B cell (primary cell): ENCODE measurements at regions of chr19 and their contacts with region 1.

Region 1: DNA sequence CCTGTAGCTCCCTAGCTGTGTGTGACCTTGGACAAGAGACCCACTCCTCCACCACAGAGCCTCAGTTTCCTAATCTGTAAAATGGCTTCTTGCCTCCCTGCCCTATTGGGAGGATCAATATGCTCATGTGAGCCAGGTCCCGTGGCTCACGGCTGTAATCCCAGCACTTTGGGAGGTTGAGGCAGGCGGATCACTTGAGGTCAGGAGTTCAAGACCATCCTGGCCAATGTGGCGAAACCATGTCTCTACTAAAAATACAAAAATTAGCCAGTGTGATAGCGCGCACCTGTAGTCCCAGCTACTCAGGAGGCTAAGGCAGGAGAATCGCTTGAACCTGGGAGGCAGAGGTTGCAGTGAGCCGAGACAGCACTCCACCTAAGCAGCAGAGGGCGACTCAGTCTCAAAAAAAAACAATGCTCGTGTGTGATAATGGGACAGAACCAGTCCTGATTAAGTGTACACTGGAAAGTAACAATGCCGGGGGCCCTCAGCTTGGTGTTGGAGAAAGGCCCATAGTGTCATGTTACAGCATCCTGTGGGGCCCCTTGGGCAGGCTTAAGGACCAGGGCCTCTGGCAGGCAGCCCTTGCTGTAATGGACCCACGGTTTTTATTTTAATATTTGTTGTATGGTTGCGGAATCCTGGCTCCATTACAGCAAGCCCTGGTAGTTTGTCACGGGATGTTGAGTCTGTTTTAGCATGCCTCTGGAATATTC is 6.8 kb downstream of the RPS11 start:
- DNase-seq: peak; percentile 72
- ATAC-seq: no peak
- H3K4me3 ChIP-seq: no peak overlapping the region
- H3K4me3 Mint-ChIP-seq: no peak overlapping the region
- H3K27ac ChIP-seq: peak overlapping the region; percentile 89 to 98
- H3K27ac Mint-ChIP-seq: peak overlapping the region; percentile 99
- H3K4me1 ChIP-seq: peaks cover 31 to 55% of the 10 kb centered on the region in 2 donors
- H3K4me1 Mint-ChIP-seq: peaks cover 51% of the 10 kb centered on the region
- H3K27me3 ChIP-seq: no peaks in the 10 kb centered on the region
- H3K27me3 Mint-ChIP-seq: no peaks in the 10 kb centered on the region
- CTCF ChIP-seq: peak; percentile 70

Region 2: GRCh38 chr19:49097455-49098288 is 405.4 kb before region 1 on chr19:
- CTCF ChIA-PET with region 1: no interaction called
- POLR2A ChIA-PET with region 1: no interaction called
- intact Hi-C with region 1: no loop called
- DNase-seq: peak; percentile 84
- ATAC-seq: peak; percentile 95
- H3K4me3 ChIP-seq: no peak overlapping the region
- H3K4me3 Mint-ChIP-seq: no peak overlapping the region
- H3K27ac ChIP-seq: no peak overlapping the region
- H3K27ac Mint-ChIP-seq: no peak overlapping the region
- H3K4me1 ChIP-seq: no peaks in the 10 kb centered on the region
- H3K4me1 Mint-ChIP-seq: peaks cover 4% of the 10 kb centered on the region
- H3K27me3 ChIP-seq: no peaks in the 10 kb centered on the region
- H3K27me3 Mint-ChIP-seq: no peaks in the 10 kb centered on the region
- CTCF ChIP-seq: peak; percentile 99

Region 3: DNA sequence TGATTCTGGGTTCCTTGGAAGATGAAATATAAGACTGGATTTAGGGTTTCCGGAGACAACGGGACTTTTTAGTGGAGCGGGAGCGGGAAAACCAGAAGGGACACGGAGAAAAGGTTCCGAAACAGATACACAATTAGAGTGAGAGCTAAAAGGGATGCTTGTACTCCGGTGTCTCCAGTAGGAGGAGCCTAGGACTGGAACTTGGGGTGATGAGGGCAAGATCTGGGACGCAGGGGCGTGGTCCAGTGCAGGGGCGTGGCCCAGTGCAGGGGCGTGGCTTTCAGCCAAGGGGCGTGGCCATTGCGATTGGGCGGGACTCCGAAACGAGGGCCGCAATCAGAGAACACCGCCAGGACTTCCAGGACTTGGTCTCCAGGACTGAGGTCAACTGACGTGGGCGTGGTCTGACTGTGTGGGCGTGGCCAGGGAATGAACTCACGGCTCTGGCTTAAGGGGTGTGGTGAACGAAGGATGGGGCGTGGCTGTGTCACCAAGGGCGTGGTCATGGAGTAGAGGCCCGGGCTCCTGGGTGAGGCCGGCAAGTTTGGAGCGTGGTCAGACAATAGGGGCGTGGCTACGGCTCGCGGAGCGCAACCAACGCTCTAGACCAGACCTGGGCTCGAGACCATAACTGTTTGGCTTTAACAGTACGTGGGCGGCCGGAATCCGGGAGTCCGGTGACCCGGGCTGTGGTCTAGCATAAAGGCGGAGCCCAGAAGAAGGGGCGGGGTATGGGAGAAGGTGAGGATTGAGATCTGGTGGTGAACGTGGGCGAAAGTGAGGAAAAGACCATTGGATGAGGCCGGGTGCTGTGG is 139.5 kb before region 1 on chr19 and contains the start of gene DKKL1:
- CTCF ChIA-PET with region 1: no interaction called
- POLR2A ChIA-PET with region 1: no interaction called
- intact Hi-C with region 1: no loop called
- DNase-seq: peak; percentile 88
- ATAC-seq: peak; percentile 80
- H3K4me3 ChIP-seq: peak within 1 kb of the TSS in 4 of 5 experiments; percentile 45 to 83 (median 58)
- H3K4me3 Mint-ChIP-seq: peak within 1 kb of the TSS; percentile 35
- H3K27ac ChIP-seq: peak within 1 kb of the TSS in 1 of 2 donors; percentile 6
- H3K27ac Mint-ChIP-seq: no peak within 1 kb of the TSS
- H3K4me1 ChIP-seq: peaks cover 46 to 55% of the 10 kb centered on the region in 2 donors
- H3K4me1 Mint-ChIP-seq: peaks cover 37% of the 10 kb centered on the region
- H3K27me3 ChIP-seq: peaks cover 0 to 10% (median 3%) of the 10 kb centered on the region in 4 experiments
- H3K27me3 Mint-ChIP-seq: no peaks in the 10 kb centered on the region
- CTCF ChIP-seq: no peak
- total RNA-seq, gene DKKL1: 0.68 and 1.2 TPM in 2 replicates

Region 4: GRCh38 chr19:49539192-49539952 is 36.3 kb after region 1 on chr19:
- CTCF ChIA-PET with region 1: interaction called, 23 read pairs
- POLR2A ChIA-PET with region 1: no interaction called
- intact Hi-C with region 1: no loop called
- DNase-seq: no peak
- ATAC-seq: no peak
- H3K4me3 ChIP-seq: no peak overlapping the region
- H3K4me3 Mint-ChIP-seq: no peak overlapping the region
- H3K27ac ChIP-seq: no peak overlapping the region
- H3K27ac Mint-ChIP-seq: peak overlapping the region; percentile 26
- H3K4me1 ChIP-seq: peaks cover 24 to 35% of the 10 kb centered on the region in 2 donors
- H3K4me1 Mint-ChIP-seq: peaks cover 35% of the 10 kb centered on the region
- H3K27me3 ChIP-seq: no peaks in the 10 kb centered on the region
- H3K27me3 Mint-ChIP-seq: no peaks in the 10 kb centered on the region
- CTCF ChIP-seq: no peak

Region 5: DNA sequence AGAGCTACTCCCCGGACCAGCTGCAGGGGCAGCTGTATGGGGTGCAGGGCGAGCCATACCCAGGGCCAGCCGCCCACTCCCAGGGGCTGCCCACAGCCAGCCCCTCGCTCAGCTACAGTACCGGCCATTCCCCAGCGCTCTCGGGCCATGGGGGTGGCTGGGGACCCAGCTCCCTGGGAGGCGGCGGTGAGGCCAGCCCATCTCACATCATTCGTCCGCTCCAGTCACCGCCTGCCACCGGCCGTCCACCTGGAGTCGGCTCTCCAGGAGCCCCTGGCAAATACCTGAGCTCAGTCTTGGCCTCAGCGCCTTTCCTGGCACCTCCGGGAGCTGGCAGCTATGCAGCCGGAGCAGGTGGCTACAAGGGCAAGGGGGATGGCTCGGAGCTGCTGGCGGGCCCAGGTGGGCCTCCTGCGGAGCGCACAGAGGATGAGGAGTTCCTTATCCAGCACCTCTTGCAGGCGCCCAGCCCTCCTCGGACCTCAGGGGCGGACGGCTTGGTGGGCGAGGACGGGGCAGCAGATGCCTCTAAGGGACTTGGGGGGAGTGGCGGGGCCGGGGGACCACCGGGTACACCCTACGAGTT is 92.9 kb after region 1 on chr19:
- CTCF ChIA-PET with region 1: no interaction called
- POLR2A ChIA-PET with region 1: no interaction called
- intact Hi-C with region 1: no loop called
- DNase-seq: no peak
- ATAC-seq: no peak
- H3K4me3 ChIP-seq: no peak overlapping the region
- H3K4me3 Mint-ChIP-seq: no peak overlapping the region
- H3K27ac ChIP-seq: no peak overlapping the region
- H3K27ac Mint-ChIP-seq: no peak overlapping the region
- H3K4me1 ChIP-seq: peaks cover 16 to 21% of the 10 kb centered on the region in 2 donors
- H3K4me1 Mint-ChIP-seq: peaks cover 22% of the 10 kb centered on the region
- H3K27me3 ChIP-seq: no peaks in the 10 kb centered on the region
- H3K27me3 Mint-ChIP-seq: no peaks in the 10 kb centered on the region
- CTCF ChIP-seq: no peak

Region 6: DNA sequence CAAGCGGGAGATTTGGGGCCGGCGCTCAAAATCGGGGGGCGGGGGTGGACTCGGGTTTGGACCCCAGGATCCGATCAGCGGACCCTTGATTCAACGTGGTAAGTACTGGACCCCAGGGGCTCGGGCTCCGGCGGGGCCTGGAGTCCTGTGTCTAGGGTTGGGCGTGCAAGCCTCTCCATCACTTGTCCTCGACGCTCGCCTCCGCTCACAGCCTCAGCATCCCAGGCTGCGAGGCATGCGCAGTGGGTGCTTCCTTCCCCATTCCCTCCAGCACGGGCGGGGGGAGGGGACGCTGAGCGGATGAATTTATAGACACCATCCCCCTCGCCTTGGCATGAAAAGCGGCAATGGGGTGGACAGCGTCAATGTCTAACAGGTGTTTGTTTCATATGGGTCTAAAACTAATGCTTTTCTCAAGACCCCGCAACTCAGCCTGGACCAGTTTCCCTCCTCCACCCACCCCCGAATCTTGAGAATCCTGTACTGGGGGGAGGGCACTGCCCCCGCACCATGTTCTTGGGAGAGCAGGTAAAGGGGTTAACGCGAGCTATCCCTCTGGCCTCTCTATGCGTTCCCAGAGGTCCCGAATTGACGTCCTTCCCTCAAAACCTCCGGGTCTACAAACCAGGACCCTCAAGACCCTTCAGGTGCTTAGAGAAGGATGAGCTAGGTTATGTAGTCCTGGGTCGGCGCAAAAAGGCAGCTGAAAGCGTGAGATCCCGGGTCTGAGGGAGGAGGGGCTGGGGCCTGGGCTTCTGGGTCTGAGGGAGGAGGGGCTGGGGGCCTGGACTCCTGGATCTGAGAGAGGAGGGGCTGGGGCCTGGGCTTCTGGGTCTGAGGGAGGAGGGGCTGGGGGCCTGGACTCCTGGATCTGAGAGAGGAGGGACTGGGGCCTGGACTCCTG is 188.5 kb after region 1 on chr19:
- CTCF ChIA-PET with region 1: no interaction called
- POLR2A ChIA-PET with region 1: interaction called, 12 read pairs
- intact Hi-C with region 1: no loop called
- DNase-seq: peak; percentile 56
- ATAC-seq: peak; percentile 26
- H3K4me3 ChIP-seq: peak overlapping the region in 4 of 5 experiments; percentile 42 to 58 (median 46)
- H3K4me3 Mint-ChIP-seq: peak overlapping the region; percentile 89
- H3K27ac ChIP-seq: no peak overlapping the region
- H3K27ac Mint-ChIP-seq: peak overlapping the region; percentile 54
- H3K4me1 ChIP-seq: peaks cover 25% of the 10 kb centered on the region in 2 donors
- H3K4me1 Mint-ChIP-seq: peaks cover 22% of the 10 kb centered on the region
- H3K27me3 ChIP-seq: peaks cover 0 to 33% (median 14%) of the 10 kb centered on the region in 4 experiments
- H3K27me3 Mint-ChIP-seq: peaks cover 31% of the 10 kb centered on the region
- CTCF ChIP-seq: no peak